CD4-positive, alpha-beta T cell (primary cell): ENCODE measurements at regions of chr1 and their contacts with region 1.

Region 1: GRCh38 chr1:244603498-244603897 is 49.4 kb upstream of the DESI2 start:
- DNase-seq: peak in 3 of 14 experiments; percentile 49 to 63 (median 59)
- ATAC-seq: no peak
- H3K4me3 ChIP-seq: no peak overlapping the region
- H3K4me3 Mint-ChIP-seq: no peak overlapping the region
- H3K27ac ChIP-seq: no peak overlapping the region
- H3K27ac Mint-ChIP-seq: no peak overlapping the region
- H3K4me1 ChIP-seq: no peaks in the 10 kb centered on the region
- H3K4me1 Mint-ChIP-seq: no peaks in the 10 kb centered on the region
- H3K27me3 ChIP-seq: no peaks in the 10 kb centered on the region
- H3K27me3 Mint-ChIP-seq: no peaks in the 10 kb centered on the region
- CTCF ChIP-seq: peak; percentile 89

Region 2: GRCh38 chr1:244414543-244414942 is 189.0 kb before region 1 on chr1:
- CTCF ChIA-PET with region 1: no interaction called
- POLR2A ChIA-PET with region 1: no interaction called
- intact Hi-C with region 1: no loop called
- DNase-seq: no peak
- ATAC-seq: no peak
- H3K4me3 ChIP-seq: no peak overlapping the region
- H3K4me3 Mint-ChIP-seq: no peak overlapping the region
- H3K27ac ChIP-seq: no peak overlapping the region
- H3K27ac Mint-ChIP-seq: no peak overlapping the region
- H3K4me1 ChIP-seq: no peaks in the 10 kb centered on the region
- H3K4me1 Mint-ChIP-seq: no peaks in the 10 kb centered on the region
- H3K27me3 ChIP-seq: no peaks in the 10 kb centered on the region
- H3K27me3 Mint-ChIP-seq: no peaks in the 10 kb centered on the region
- CTCF ChIP-seq: no peak

Region 3: GRCh38 chr1:244801246-244801645 is 197.7 kb after region 1 on chr1:
- CTCF ChIA-PET with region 1: interaction called, 18 read pairs
- POLR2A ChIA-PET with region 1: interaction called, 4 read pairs
- intact Hi-C with region 1: loop called (anchors 1 kb)
- DNase-seq: peak; percentile 23 to 81 (median 46)
- ATAC-seq: peak; percentile 91
- H3K4me3 ChIP-seq: no peak overlapping the region
- H3K4me3 Mint-ChIP-seq: no peak overlapping the region
- H3K27ac ChIP-seq: no peak overlapping the region
- H3K27ac Mint-ChIP-seq: no peak overlapping the region
- H3K4me1 ChIP-seq: peaks cover 3% of the 10 kb centered on the region
- H3K4me1 Mint-ChIP-seq: peaks cover 4% of the 10 kb centered on the region
- H3K27me3 ChIP-seq: no peaks in the 10 kb centered on the region
- H3K27me3 Mint-ChIP-seq: peaks cover 4% of the 10 kb centered on the region
- CTCF ChIP-seq: peak; percentile 83